Esophagus muscularis mucosa (tissue), 4 donors: ENCODE measurements at regions of chr14 and their contacts with region 1.

Region 1: GRCh38 chr14:32611752-32612151 is 282.7 kb downstream of the AKAP6 start:
- DNase-seq: no peak
- H3K4me3 ChIP-seq: no peak overlapping the region
- H3K27ac ChIP-seq: peak overlapping the region in 2 of 4 donors; percentile 9 to 68
- H3K4me1 ChIP-seq: peaks cover 26 to 49% (median 41%) of the 10 kb centered on the region in 4 donors
- H3K27me3 ChIP-seq: no peaks in the 10 kb centered on the region
- CTCF ChIP-seq: no peak
- EP300 ChIP-seq: no peak
- POLR2A ChIP-seq: no peak

Region 2: GRCh38 chr14:32623300-32624093 is 11.7 kb after region 1 on chr14:
- intact Hi-C with region 1: no loop called
- DNase-seq: no peak
- H3K4me3 ChIP-seq: no peak overlapping the region
- H3K27ac ChIP-seq: no peak overlapping the region
- H3K4me1 ChIP-seq: peaks cover 0 to 4% (median 0%) of the 10 kb centered on the region in 4 donors
- H3K27me3 ChIP-seq: no peaks in the 10 kb centered on the region
- CTCF ChIP-seq: no peak
- EP300 ChIP-seq: no peak
- POLR2A ChIP-seq: no peak

Region 3: DNA sequence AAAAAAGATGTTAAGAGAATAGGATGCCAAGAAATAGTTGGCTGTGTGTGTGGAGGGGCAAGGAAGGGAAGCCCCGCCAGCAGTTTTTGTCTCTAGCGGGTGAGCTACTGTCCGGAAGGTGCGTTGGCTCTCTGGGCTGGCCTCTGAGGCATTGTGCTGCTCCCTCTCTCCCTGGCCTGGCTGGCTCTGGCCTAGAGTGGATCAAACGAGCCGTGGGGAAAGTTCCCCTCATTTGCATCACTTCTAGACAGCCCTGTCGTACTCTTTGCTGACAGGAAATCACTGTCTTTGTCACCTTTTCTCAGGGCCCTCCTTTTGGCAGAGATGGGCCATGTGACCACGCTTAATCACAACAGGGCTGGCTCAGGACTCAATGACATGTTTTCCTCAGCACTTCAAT is 90.8 kb after region 1 on chr14:
- intact Hi-C with region 1: loop called (anchors 10 kb)
- DNase-seq: no peak
- H3K4me3 ChIP-seq: peak overlapping the region in 3 of 4 donors; percentile 5 to 39 (median 21)
- H3K27ac ChIP-seq: peak overlapping the region; percentile 76 to 85 (median 83)
- H3K4me1 ChIP-seq: peaks cover 34 to 50% (median 42%) of the 10 kb centered on the region in 4 donors
- H3K27me3 ChIP-seq: no peaks in the 10 kb centered on the region
- CTCF ChIP-seq: no peak
- EP300 ChIP-seq: peak; percentile 55
- POLR2A ChIP-seq: no peak

Region 4: DNA sequence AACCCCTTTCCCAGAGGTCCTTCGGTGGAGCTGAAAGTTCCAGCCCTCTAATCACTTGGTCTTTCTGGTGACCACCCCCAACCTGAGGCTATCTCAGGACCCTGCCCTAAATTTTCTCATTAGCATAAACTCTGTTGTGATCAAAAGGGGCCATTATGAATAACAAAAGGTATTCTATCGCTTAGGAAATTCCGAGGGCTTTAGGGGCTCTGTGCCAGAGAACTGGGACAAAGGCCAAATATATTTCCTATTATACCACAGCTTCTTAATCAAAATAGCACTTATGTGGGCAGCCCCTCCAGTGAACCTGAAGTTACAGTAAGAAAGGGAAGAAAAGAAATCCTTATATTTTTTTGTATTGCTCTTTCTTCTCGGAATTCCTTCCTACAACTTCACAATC is 201.6 kb after region 1 on chr14:
- intact Hi-C with region 1: loop called (anchors 10 kb)
- DNase-seq: no peak
- H3K4me3 ChIP-seq: no peak overlapping the region
- H3K27ac ChIP-seq: no peak overlapping the region
- H3K4me1 ChIP-seq: peaks cover 18 to 23% (median 20%) of the 10 kb centered on the region in 4 donors
- H3K27me3 ChIP-seq: no peaks in the 10 kb centered on the region
- CTCF ChIP-seq: no peak
- EP300 ChIP-seq: no peak
- POLR2A ChIP-seq: no peak